ENCODE measurements at regions of chr15 and their contacts with region 1.

Region 1: DNA sequence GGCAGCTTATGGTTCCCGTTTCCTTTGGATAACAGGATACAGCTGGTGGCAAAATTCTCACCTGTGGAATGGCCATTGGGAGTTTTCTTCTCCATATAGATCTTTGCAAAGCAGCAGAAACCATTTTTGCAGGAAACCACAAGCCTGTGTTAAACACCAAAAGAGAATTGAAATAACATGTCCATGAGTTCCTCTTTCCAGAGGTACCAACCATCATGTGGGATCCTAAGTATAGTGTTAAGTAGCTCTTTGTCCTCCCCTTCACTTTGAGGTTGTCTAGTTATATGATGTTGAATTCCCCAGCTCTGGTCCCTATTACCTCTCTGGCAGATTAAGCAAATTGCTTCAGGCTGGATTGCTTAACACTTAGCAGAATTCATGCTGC is 94.9 kb downstream of the AKAP13 start:
- DNase-seq: peak; percentile 17
- H3K4me3 ChIP-seq: no peak overlapping the region
- H3K27ac ChIP-seq: no peak overlapping the region
- H3K4me1 ChIP-seq: peaks cover 55% of the 10 kb centered on the region
- H3K27me3 ChIP-seq: no peaks in the 10 kb centered on the region

Region 2: GRCh38 chr15:85330901-85331588 is 144.3 kb before region 1 on chr15:
- in situ Hi-C with region 1: loop called (anchors 10 kb)
- DNase-seq: peak; percentile 95
- H3K4me3 ChIP-seq: peak overlapping the region; percentile 92; the same call in 1 of the 2 replicates
- H3K27ac ChIP-seq: peak overlapping the region; percentile 27; the same call in 1 of the 2 replicates
- H3K4me1 ChIP-seq: peaks cover 39% of the 10 kb centered on the region
- H3K27me3 ChIP-seq: no peaks in the 10 kb centered on the region

Measured in GM23248 (cell line).